HAP-1 (cell line): ENCODE measurements at regions of chr6 and their contacts with region 1.

Region 1: DNA sequence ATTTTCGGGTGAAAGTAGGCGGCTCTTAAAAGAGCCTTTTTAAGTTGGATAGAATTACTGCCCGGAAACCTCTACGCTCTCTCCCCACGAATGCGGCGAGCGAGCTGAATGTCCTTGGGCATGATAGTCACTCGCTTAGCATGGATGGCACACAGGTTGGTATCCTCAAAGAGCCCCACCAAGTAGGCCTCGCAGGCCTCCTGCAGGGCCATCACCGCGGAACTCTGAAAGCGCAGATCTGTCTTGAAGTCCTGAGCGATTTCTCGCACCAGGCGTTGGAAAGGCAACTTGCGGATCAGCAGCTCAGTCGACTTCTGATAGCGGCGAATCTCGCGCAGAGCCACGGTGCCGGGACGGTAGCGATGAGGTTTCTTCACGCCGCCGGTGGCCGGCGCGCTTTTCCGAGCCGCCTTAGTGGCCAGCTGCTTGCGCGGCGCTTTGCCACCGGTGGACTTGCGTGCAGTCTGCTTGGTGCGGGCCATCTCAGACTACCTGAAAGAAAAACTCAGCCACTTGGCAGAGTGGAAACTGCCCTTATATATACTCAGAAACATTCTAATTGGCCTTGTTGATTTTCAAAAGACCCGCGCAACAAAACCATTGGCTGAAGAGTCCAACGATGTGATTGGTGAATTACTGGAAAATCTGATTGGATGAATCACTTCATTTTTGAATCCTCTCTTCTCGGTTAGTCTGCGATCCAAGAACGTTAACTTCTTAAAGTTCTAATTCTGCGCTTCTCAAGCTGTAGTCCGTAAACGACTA is 93.9 kb upstream of the BTN3A2 start:
- DNase-seq: peak; percentile 87 to 98
- H3K4me3 ChIP-seq: peak overlapping the region; percentile 75
- H3K4me1 ChIP-seq: peaks cover 24% of the 10 kb centered on the region
- H3K27me3 ChIP-seq: no peaks in the 10 kb centered on the region

Region 2: GRCh38 chr6:26025894-26026832 is 244.9 kb before region 1 on chr6:
- in situ Hi-C with region 1: loop called (anchors 10 kb)
- DNase-seq: peak; percentile 94 to 97
- H3K4me3 ChIP-seq: peak overlapping the region; percentile 42
- H3K4me1 ChIP-seq: peaks cover 55% of the 10 kb centered on the region
- H3K27me3 ChIP-seq: no peaks in the 10 kb centered on the region

Region 3: DNA sequence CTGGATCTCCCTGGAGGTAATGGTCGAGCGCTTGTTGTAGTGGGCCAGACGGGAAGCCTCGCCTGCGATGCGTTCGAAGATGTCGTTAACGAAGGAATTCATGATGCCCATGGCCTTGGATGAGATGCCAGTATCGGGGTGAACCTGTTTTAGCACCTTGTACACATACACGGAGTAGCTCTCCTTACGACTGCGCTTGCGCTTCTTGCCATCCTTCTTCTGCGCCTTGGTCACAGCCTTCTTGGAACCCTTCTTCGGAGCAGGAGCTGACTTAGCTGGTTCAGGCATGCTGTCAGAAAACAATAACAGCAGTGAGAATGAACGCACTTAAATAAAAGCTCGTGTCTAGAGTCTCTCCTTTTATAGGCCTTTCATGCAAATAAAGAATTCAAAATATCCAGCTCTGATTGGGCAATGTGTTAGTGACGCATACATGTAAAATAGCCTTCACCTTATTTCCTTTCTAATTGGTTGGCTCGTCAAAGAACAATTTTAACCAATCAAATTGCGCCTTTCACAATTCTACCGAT is 54.7 kb before region 1 on chr6:
- in situ Hi-C with region 1: loop called (anchors 5 kb)
- DNase-seq: peak; percentile 87 to 96
- H3K4me3 ChIP-seq: peak overlapping the region; percentile 45
- H3K4me1 ChIP-seq: peaks cover 10% of the 10 kb centered on the region
- H3K27me3 ChIP-seq: no peaks in the 10 kb centered on the region

Region 4: GRCh38 chr6:27132532-27133280 is 861.6 kb after region 1 on chr6:
- in situ Hi-C with region 1: loop called (anchors 5 kb)
- DNase-seq: peak; percentile 90 to 97
- H3K4me3 ChIP-seq: peak overlapping the region; percentile 51
- H3K4me1 ChIP-seq: peaks cover 43% of the 10 kb centered on the region
- H3K27me3 ChIP-seq: no peaks in the 10 kb centered on the region

Region 5: GRCh38 chr6:27157459-27158315 is 886.6 kb after region 1 on chr6:
- in situ Hi-C with region 1: no loop called
- DNase-seq: peak; percentile 67 to 84
- H3K4me3 ChIP-seq: peak overlapping the region; percentile 31
- H3K4me1 ChIP-seq: no peaks in the 10 kb centered on the region; the same call in 1 of the 2 replicates
- H3K27me3 ChIP-seq: no peaks in the 10 kb centered on the region